GM12878 (cell line): ENCODE measurements at regions of chr2 and their contacts with region 1.

Region 1: DNA sequence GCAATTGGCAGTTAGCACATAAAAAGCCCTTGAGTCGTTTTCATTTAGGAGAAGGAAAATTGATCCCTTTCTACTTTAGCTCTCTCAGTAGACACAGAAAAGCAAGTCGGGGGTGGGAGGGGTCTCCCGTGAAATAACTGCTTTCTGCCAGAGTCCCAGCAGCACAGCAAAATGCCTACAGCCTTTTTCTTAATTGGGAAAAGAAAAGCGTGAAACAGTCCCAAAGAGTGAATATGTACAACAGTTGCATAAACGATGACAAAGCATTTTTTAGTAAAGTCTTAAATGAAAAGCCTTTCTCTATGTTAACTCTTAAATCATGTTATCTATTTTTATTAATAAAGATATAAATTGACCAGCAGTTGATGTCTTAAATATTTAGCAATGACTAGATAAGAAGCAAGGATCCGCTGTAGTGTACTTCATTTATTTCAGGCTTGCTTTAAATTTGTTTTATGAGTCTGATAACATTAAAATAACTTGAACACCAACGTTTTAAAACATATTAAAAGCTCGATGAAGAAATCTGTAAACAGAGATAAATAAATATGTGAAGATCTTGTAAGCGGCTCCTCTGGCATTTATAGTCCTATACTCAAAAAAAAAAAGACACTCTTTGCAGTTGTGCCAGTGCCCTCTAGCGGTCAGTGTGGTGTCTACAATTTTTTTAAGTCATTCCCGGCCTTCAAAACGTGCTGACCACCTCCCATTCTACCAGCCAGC is 42.3 kb upstream of the ATIC start:
- DNase-seq: peak; percentile 40
- ATAC-seq: peak; percentile 77
- H3K4me3 ChIP-seq: no peak overlapping the region
- H3K27ac ChIP-seq: no peak overlapping the region
- H3K4me1 ChIP-seq: peaks cover 4% of the 10 kb centered on the region; the same call in 1 of the 2 replicates
- H3K27me3 ChIP-seq: no peaks in the 10 kb centered on the region
- CTCF ChIP-seq: peak; percentile 69 to 73 (median 69)
- EP300 ChIP-seq: no peak
- POLR2A ChIP-seq: no peak
- RAD21 ChIP-seq: peak; percentile 81

Region 2: DNA sequence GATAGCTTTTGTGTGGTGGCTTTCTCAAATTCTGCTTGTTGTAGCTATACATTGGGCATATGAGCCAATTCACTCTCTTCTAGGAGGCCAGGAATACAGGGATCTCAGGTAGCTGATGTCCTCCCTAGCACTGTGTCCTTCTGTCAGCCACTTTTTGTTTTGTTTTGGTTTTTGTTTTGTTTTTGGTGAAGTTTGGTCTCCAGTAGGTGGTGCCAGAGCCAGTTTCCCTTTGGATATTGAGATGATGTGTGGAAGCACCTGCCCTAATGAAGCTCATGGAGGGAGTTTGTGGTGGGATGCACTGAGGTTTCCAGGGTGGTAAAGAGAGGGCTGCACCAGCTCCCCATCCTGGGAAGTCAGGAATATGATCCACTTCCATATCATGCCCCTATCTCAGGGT is 959.2 kb before region 1 on chr2:
- CTCF ChIA-PET with region 1: interaction called, 4 read pairs
- POLR2A ChIA-PET with region 1: no interaction called
- RAD21 ChIA-PET with region 1: no interaction called
- SMC1A ChIA-PET with region 1: no interaction called
- in situ Hi-C with region 1: no loop called
- intact Hi-C with region 1: loop called (anchors 10 kb)
- DNase-seq: no peak
- ATAC-seq: peak; percentile 75
- H3K4me3 ChIP-seq: no peak overlapping the region
- H3K27ac ChIP-seq: no peak overlapping the region
- H3K4me1 ChIP-seq: no peaks in the 10 kb centered on the region; the same call in 1 of the 2 replicates
- H3K27me3 ChIP-seq: no peaks in the 10 kb centered on the region
- CTCF ChIP-seq: peak; percentile 33 to 45 (median 35); a peak in 5 of 6 replicates
- EP300 ChIP-seq: no peak
- POLR2A ChIP-seq: no peak
- RAD21 ChIP-seq: peak; percentile 52

Region 3: DNA sequence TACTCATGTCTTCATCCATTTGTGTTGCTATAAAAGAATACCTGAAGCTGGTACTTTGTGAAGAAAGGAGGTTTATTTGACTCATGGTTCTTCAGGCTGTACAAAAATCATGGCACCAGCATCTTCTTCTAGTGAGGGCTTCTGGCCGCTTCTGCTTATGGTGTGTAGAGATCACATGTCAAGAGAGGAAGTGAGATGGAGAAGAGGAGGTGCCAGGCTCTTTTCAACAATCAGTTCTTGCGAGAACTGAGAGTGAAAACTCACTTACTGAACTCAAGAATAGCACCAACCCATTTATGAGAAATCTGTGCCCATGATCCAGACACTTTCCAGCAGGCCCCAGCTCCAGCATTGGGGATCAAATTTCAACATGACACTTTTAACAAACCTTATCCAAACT is 430.1 kb before region 1 on chr2:
- CTCF ChIA-PET with region 1: no interaction called
- POLR2A ChIA-PET with region 1: no interaction called
- RAD21 ChIA-PET with region 1: no interaction called
- SMC1A ChIA-PET with region 1: no interaction called
- in situ Hi-C with region 1: no loop called
- intact Hi-C with region 1: no loop called
- DNase-seq: peak; percentile 8
- ATAC-seq: peak; percentile 84
- H3K4me3 ChIP-seq: no peak overlapping the region
- H3K27ac ChIP-seq: no peak overlapping the region; the same call in 1 of the 2 replicates
- H3K4me1 ChIP-seq: peaks cover 3% of the 10 kb centered on the region; the same call in 1 of the 2 replicates
- H3K27me3 ChIP-seq: no peaks in the 10 kb centered on the region
- CTCF ChIP-seq: no peak
- EP300 ChIP-seq: no peak
- POLR2A ChIP-seq: no peak
- RAD21 ChIP-seq: no peak

Region 4: DNA sequence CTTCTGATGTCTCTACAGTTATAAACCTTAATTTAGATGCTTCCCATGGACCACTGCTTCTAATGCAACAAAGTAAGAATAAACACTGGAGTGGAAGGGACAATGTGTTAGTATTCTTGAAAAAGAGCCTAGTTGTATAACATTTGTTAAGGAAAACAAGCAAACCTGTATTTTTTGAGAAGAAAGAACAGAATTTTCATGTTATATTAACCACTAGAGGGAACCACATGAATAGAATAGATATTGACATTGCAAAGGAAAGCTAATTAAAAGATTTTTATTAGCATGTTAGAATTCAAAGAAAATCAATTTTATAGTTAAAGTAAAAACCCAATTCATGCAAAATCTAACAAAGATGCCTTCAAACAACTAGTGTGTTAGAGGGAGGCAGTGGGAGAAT is 308.9 kb before region 1 on chr2:
- CTCF ChIA-PET with region 1: interaction called, 11 read pairs
- POLR2A ChIA-PET with region 1: no interaction called
- RAD21 ChIA-PET with region 1: interaction called, 9 read pairs
- SMC1A ChIA-PET with region 1: interaction called, 27 read pairs
- in situ Hi-C with region 1: loop called (anchors 10 kb)
- intact Hi-C with region 1: loop called (anchors 2 kb)
- DNase-seq: no peak
- ATAC-seq: peak; percentile 29; the same call in 1 of the 3 replicates
- H3K4me3 ChIP-seq: no peak overlapping the region
- H3K27ac ChIP-seq: no peak overlapping the region; the same call in 1 of the 2 replicates
- H3K4me1 ChIP-seq: no peaks in the 10 kb centered on the region
- H3K27me3 ChIP-seq: no peaks in the 10 kb centered on the region
- CTCF ChIP-seq: peak in 1 of 3 experiments; percentile 14; a peak in 2 of 6 replicates
- EP300 ChIP-seq: no peak
- POLR2A ChIP-seq: no peak
- RAD21 ChIP-seq: no peak

Region 5: DNA sequence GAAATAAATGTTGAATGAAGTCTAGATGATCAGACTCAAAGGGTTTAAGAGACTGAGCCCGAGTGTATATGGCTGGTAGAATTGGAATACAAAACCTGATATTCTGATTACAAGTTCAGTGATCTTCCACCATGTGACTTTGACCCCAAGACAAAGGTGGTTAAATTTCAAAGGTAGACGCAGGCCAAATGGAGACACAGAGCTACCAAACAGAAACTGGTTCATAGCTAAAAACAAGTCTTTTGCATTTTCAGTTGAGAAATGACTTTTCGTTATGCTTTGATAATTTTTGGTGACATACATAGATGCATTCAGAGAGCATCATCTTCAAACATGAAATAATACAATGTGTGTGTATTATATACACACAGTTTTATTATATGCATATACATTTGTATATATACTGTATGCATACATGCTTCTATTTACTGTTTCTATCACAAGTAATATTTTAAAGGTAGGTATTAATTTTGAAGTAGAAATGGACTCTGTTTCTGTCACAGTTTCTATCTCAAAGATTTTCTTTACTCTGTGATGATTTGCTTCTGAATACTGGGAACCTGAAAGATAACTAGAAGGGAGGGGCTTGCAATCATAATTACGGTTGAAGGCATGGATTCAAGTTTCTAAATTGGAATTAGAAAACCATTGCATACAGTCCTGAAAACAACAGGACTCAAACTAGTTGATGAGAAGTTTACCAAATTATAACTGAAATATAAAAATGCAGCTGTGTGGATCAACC is 273.5 kb before region 1 on chr2:
- CTCF ChIA-PET with region 1: interaction called, 4 read pairs
- POLR2A ChIA-PET with region 1: no interaction called
- RAD21 ChIA-PET with region 1: interaction called, 5 read pairs
- SMC1A ChIA-PET with region 1: interaction called, 4 read pairs
- in situ Hi-C with region 1: no loop called
- intact Hi-C with region 1: loop called (anchors 5 kb)
- DNase-seq: peak; percentile 85
- ATAC-seq: peak; percentile 96
- H3K4me3 ChIP-seq: 0 out of 2 replicates have a peak overlapping the region, but pooled peaks have one; percentile 21
- H3K27ac ChIP-seq: peak overlapping the region; percentile 89
- H3K4me1 ChIP-seq: peaks cover 20% of the 10 kb centered on the region
- H3K27me3 ChIP-seq: no peaks in the 10 kb centered on the region
- CTCF ChIP-seq: no peak
- EP300 ChIP-seq: peak; percentile 70 to 82; a peak in 2 of 4 replicates
- POLR2A ChIP-seq: no peak
- RAD21 ChIP-seq: no peak

Region 6: DNA sequence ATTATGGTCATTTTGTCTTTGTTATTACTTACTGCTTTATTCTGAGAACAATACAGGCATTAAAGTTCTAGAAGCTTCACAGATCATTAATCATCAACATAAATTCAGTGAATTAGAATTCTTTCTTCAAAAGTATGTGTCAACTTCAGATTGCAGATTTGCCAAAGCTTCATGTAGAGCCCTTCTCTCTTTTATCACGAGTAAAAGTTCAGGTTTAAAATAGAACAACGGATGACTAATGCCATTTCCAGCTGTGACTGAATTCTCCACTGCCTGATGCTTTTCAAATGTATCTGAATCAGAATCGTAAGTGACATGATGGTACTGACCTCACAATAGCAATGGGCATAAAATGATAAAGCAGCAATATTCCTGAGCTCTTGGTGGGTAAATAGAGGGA is 247.1 kb before region 1 on chr2:
- CTCF ChIA-PET with region 1: interaction called, 3 read pairs
- POLR2A ChIA-PET with region 1: no interaction called
- RAD21 ChIA-PET with region 1: no interaction called
- SMC1A ChIA-PET with region 1: no interaction called
- in situ Hi-C with region 1: no loop called
- intact Hi-C with region 1: loop called (anchors 5 kb)
- DNase-seq: no peak
- ATAC-seq: no peak
- H3K4me3 ChIP-seq: no peak overlapping the region
- H3K27ac ChIP-seq: no peak overlapping the region
- H3K4me1 ChIP-seq: peaks cover 11% of the 10 kb centered on the region
- H3K27me3 ChIP-seq: no peaks in the 10 kb centered on the region
- CTCF ChIP-seq: no peak
- EP300 ChIP-seq: no peak
- POLR2A ChIP-seq: no peak
- RAD21 ChIP-seq: no peak

Region 7: GRCh38 chr2:215171151-215171550 is 98.4 kb before region 1 on chr2:
- CTCF ChIA-PET with region 1: no interaction called
- POLR2A ChIA-PET with region 1: no interaction called
- RAD21 ChIA-PET with region 1: no interaction called
- SMC1A ChIA-PET with region 1: no interaction called
- in situ Hi-C with region 1: no loop called
- intact Hi-C with region 1: no loop called
- DNase-seq: peak; percentile 26
- ATAC-seq: peak; percentile 96
- H3K4me3 ChIP-seq: no peak overlapping the region
- H3K27ac ChIP-seq: no peak overlapping the region
- H3K4me1 ChIP-seq: no peaks in the 10 kb centered on the region
- H3K27me3 ChIP-seq: no peaks in the 10 kb centered on the region
- CTCF ChIP-seq: no peak
- EP300 ChIP-seq: no peak
- POLR2A ChIP-seq: no peak
- RAD21 ChIP-seq: no peak

Region 8: GRCh38 chr2:215188078-215188477 is 81.5 kb before region 1 on chr2:
- CTCF ChIA-PET with region 1: no interaction called
- POLR2A ChIA-PET with region 1: no interaction called
- RAD21 ChIA-PET with region 1: no interaction called
- SMC1A ChIA-PET with region 1: no interaction called
- in situ Hi-C with region 1: no loop called
- intact Hi-C with region 1: no loop called
- DNase-seq: no peak
- ATAC-seq: no peak; the same call in 2 of the 3 replicates
- H3K4me3 ChIP-seq: no peak overlapping the region
- H3K27ac ChIP-seq: no peak overlapping the region
- H3K4me1 ChIP-seq: no peaks in the 10 kb centered on the region
- H3K27me3 ChIP-seq: no peaks in the 10 kb centered on the region
- CTCF ChIP-seq: no peak
- EP300 ChIP-seq: no peak
- POLR2A ChIP-seq: no peak
- RAD21 ChIP-seq: no peak

Region 9: DNA sequence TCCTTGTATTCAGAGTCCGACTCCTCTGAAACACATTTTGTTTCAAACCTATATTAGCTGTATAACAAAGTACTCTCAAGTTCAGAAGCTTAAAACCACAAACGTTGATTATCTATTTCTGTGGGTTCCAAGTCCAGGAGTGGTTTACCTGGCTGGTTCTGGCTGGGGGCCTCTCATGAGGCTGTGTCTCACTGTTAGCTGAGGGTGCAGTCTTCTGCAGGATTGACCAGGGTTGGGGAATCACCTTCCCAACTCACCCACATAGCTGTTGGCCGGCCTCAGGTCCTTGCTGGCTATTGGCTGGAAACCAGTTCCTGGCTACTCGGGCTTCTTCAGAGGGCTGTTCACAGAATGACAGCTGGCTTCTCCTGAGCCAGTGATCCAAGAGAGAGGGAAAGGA is 24.3 kb after region 1 on chr2:
- CTCF ChIA-PET with region 1: interaction called, 7 read pairs
- POLR2A ChIA-PET with region 1: no interaction called
- RAD21 ChIA-PET with region 1: interaction called, 6 read pairs
- SMC1A ChIA-PET with region 1: interaction called, 13 read pairs
- in situ Hi-C with region 1: no loop called
- intact Hi-C with region 1: no loop called
- DNase-seq: no peak
- ATAC-seq: peak; percentile 95
- H3K4me3 ChIP-seq: no peak overlapping the region
- H3K27ac ChIP-seq: no peak overlapping the region
- H3K4me1 ChIP-seq: no peaks in the 10 kb centered on the region
- H3K27me3 ChIP-seq: no peaks in the 10 kb centered on the region
- CTCF ChIP-seq: no peak
- EP300 ChIP-seq: no peak
- POLR2A ChIP-seq: no peak
- RAD21 ChIP-seq: no peak